ENCODE measurements at regions of chr2 and their contacts with region 1.

Region 1: DNA sequence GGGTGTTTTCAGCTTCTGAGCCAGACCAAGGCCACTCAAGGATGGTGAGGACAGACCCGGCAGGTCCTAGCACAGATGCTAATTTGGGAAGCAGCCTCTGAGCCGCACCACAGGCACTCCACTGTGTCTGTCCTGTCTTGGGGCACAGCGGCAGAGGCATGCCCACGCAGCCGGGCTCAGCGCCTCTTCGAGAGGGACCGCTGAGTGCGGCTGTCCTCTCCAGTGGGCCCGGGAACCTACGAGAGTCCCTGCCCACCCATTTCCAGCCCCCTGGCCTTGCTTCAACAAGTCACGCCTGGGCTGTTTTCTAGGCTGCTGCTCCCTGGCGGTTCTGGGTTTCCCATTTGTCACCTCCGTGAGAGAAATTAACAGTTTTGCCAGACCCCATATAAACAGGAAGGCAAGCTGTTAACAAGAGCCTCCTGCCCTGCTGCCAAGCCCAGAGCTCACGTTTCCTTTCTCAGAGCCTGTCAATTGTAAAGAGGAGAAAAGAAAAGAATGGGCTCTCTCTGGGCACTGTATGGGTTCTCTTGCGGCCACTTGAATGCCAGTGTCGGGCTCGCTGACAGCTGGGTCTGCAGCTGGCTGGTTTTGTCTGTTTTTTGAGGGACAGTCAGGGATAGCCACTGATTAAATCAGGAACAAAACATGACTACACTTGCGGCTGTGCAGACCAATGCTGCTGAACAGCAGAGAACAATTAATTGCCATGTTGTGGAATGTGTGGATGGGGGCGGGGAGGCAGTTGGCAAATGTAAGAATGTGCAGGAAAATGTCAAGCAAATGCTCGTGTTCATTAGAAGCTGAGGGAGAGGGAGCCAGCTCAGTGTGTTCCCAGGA is 30.6 kb downstream of the TMEM17 start:
- DNase-seq: no peak
- H3K4me3 ChIP-seq: peak overlapping the region; percentile 4 to 37 (median 34)
- H3K27ac ChIP-seq: peak overlapping the region; percentile 62 to 83 (median 78)
- H3K4me1 ChIP-seq: peaks cover 0 to 63% (median 51%) of the 10 kb centered on the region in 4 donors
- H3K27me3 ChIP-seq: no peaks in the 10 kb centered on the region
- CTCF ChIP-seq: no peak
- EP300 ChIP-seq: no peak
- POLR2A ChIP-seq: no peak

Region 2: GRCh38 chr2:62221141-62221540 is 254.3 kb before region 1 on chr2:
- intact Hi-C with region 1: no loop called
- DNase-seq: no peak
- H3K4me3 ChIP-seq: no peak overlapping the region
- H3K27ac ChIP-seq: peak overlapping the region in 1 of 4 donors; percentile 13
- H3K4me1 ChIP-seq: peaks cover 0 to 50% (median 36%) of the 10 kb centered on the region in 4 donors
- H3K27me3 ChIP-seq: no peaks in the 10 kb centered on the region
- CTCF ChIP-seq: no peak
- EP300 ChIP-seq: no peak
- POLR2A ChIP-seq: no peak

Region 3: GRCh38 chr2:62505750-62506420 is 30.5 kb after region 1 on chr2 and contains the start of gene TMEM17:
- intact Hi-C with region 1: loop called (anchors 5 kb)
- DNase-seq: peak; percentile 97
- H3K4me3 ChIP-seq: peak within 1 kb of the TSS; percentile 44 to 71 (median 66)
- H3K27ac ChIP-seq: peak within 1 kb of the TSS; percentile 89 to 92 (median 90)
- H3K4me1 ChIP-seq: peaks cover 0 to 15% (median 7%) of the 10 kb centered on the region in 4 donors
- H3K27me3 ChIP-seq: no peaks in the 10 kb centered on the region
- CTCF ChIP-seq: no peak
- EP300 ChIP-seq: peak in 1 of 4 donors; percentile 34
- POLR2A ChIP-seq: no peak
- total RNA-seq, gene TMEM17: 1.5 to 3.4 (median 2.1) TPM

Region 4: DNA sequence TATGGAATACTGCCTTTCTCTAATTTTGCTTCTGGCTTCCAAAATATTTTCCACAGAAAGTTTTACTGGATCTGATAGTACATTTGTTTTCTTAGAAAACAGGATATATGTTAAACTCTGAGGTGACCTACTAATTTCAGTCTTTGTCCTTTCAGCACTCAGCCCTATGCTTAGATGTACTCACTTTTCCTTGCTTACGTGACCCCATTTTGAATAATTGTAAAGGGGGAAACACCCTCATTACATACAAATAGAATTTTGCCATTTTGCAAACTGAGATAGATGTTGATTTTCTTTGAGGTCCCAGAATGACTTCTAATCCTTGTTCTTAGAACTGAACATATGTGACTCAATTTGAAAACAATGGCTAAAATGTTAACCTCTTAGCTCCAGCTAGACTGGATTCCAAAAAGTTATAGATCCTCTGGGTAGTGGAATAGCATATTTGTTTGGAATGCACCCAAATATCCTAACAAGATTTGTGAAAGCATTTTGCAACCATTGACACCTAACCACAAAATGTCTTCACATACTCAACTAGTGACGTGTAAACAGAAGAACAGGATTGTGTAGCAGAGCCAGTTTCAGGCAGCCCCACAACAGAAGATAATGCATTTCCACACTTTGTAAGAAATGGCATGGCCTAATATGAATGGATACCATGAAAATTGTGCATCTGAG is 185.3 kb after region 1 on chr2:
- intact Hi-C with region 1: loop called (anchors 10 kb)
- DNase-seq: no peak
- H3K4me3 ChIP-seq: no peak overlapping the region
- H3K27ac ChIP-seq: peak overlapping the region; percentile 41 to 85 (median 82)
- H3K4me1 ChIP-seq: peaks cover 0 to 72% (median 60%) of the 10 kb centered on the region in 4 donors
- H3K27me3 ChIP-seq: no peaks in the 10 kb centered on the region
- CTCF ChIP-seq: no peak
- EP300 ChIP-seq: no peak
- POLR2A ChIP-seq: no peak

Measured in sigmoid colon (tissue), 7 donors.